ENCODE measurements at regions of chr11 and their contacts with region 1.

Region 1: GRCh38 chr11:73760679-73761402 is at the start of gene RAB6A:
- DNase-seq: peak; percentile 99 to 100 (median 99)
- ATAC-seq: peak; percentile 93
- H3K4me3 ChIP-seq: peak within 1 kb of the TSS; percentile 69 to 93
- H3K4me3 Mint-ChIP-seq: peak within 1 kb of the TSS; percentile 85
- H3K27ac ChIP-seq: peak within 1 kb of the TSS; percentile 71 to 90
- H3K27ac Mint-ChIP-seq: peak within 1 kb of the TSS; percentile 95
- H3K4me1 ChIP-seq: peaks cover 17% of the 10 kb centered on the region
- H3K4me1 Mint-ChIP-seq: peaks cover 29% of the 10 kb centered on the region
- H3K27me3 ChIP-seq: no peaks in the 10 kb centered on the region
- H3K27me3 Mint-ChIP-seq: no peaks in the 10 kb centered on the region
- CTCF ChIP-seq: peak; percentile 24
- total RNA-seq, gene RAB6A: 43.7 to 53.3 TPM

Region 2: GRCh38 chr11:73126804-73127480 is 633.9 kb before region 1 on chr11:
- CTCF ChIA-PET with region 1: no interaction called
- POLR2A ChIA-PET with region 1: no interaction called
- intact Hi-C with region 1: no loop called
- DNase-seq: no peak
- ATAC-seq: no peak
- H3K4me3 ChIP-seq: no peak overlapping the region
- H3K4me3 Mint-ChIP-seq: no peak overlapping the region
- H3K27ac ChIP-seq: no peak overlapping the region
- H3K27ac Mint-ChIP-seq: no peak overlapping the region
- H3K4me1 ChIP-seq: no peaks in the 10 kb centered on the region
- H3K4me1 Mint-ChIP-seq: peaks cover 11% of the 10 kb centered on the region
- H3K27me3 ChIP-seq: no peaks in the 10 kb centered on the region
- H3K27me3 Mint-ChIP-seq: no peaks in the 10 kb centered on the region
- CTCF ChIP-seq: no peak

Region 3: DNA sequence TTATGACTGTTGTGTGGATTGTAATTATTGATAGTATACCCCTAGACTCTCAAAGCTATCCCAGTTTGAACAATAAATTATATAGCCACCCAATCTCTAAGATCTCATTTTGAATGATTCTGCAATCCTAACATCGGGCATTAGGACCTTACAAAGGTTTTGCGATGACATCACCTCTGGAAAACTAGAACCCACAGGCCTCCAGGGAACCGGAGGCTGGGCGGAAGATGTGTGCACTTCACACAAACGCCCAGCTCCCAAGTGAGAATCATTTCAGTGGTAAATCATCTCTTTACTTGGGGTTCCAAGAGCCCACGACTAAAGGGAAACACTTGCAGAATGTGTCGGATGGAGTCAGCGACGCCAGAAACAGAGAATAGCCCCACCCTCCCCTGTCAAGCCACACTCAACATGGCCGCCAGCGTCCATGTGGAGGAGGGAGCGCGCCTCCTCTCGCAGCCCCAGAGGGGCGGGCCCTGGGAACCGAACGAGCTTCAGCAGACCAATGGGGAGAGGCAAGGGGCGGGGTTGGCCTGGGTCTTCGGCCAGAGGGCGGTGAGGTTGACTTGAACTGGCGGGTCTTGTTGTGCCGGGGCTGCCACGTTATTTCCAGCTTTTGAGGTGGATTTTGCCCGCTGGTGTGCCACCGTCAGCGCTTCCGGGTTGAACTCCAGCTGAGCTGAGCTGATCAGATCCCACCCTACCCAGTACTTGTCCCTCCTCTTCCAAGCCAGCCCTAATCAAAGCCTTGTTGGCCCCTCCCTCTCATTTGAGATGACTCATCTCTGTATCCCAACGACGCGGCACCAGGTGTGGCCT is 18.5 kb after region 1 on chr11:
- CTCF ChIA-PET with region 1: interaction called, 23 read pairs
- POLR2A ChIA-PET with region 1: interaction called, 87 read pairs
- intact Hi-C with region 1: loop called (anchors 1 kb)
- DNase-seq: peak; percentile 95 to 99 (median 97)
- ATAC-seq: peak; percentile 97
- H3K4me3 ChIP-seq: peak overlapping the region; percentile 52 to 62
- H3K4me3 Mint-ChIP-seq: peak overlapping the region; percentile 97
- H3K27ac ChIP-seq: peak overlapping the region; percentile 83 to 97
- H3K27ac Mint-ChIP-seq: peak overlapping the region; percentile 100
- H3K4me1 ChIP-seq: peaks cover 4% of the 10 kb centered on the region
- H3K4me1 Mint-ChIP-seq: peaks cover 16% of the 10 kb centered on the region
- H3K27me3 ChIP-seq: no peaks in the 10 kb centered on the region
- H3K27me3 Mint-ChIP-seq: no peaks in the 10 kb centered on the region
- CTCF ChIP-seq: no peak

Region 4: GRCh38 chr11:73787643-73788537 is 27.0 kb after region 1 on chr11 and contains the start of gene MRPL48:
- CTCF ChIA-PET with region 1: interaction called, 3 read pairs
- POLR2A ChIA-PET with region 1: interaction called, 15 read pairs
- intact Hi-C with region 1: loop called (anchors 1 to 5 kb)
- DNase-seq: peak; percentile 75 to 93 (median 88)
- ATAC-seq: peak; percentile 100
- H3K4me3 ChIP-seq: peak within 1 kb of the TSS; percentile 87 to 89
- H3K4me3 Mint-ChIP-seq: peak within 1 kb of the TSS; percentile 100
- H3K27ac ChIP-seq: peak within 1 kb of the TSS; percentile 77 to 82
- H3K27ac Mint-ChIP-seq: peak within 1 kb of the TSS; percentile 99
- H3K4me1 ChIP-seq: peaks cover 4% of the 10 kb centered on the region
- H3K4me1 Mint-ChIP-seq: peaks cover 33% of the 10 kb centered on the region
- H3K27me3 ChIP-seq: no peaks in the 10 kb centered on the region
- H3K27me3 Mint-ChIP-seq: no peaks in the 10 kb centered on the region
- CTCF ChIP-seq: no peak
- total RNA-seq, gene MRPL48: 10.2 to 13.7 TPM

Measured in CD8-positive, alpha-beta T cell (primary cell).